Activated B cell treated with CpG ODN at 0.5 μM for 24 hours (primary cell): ENCODE measurements at regions of chr2 and their contacts with region 1.

Region 1: DNA sequence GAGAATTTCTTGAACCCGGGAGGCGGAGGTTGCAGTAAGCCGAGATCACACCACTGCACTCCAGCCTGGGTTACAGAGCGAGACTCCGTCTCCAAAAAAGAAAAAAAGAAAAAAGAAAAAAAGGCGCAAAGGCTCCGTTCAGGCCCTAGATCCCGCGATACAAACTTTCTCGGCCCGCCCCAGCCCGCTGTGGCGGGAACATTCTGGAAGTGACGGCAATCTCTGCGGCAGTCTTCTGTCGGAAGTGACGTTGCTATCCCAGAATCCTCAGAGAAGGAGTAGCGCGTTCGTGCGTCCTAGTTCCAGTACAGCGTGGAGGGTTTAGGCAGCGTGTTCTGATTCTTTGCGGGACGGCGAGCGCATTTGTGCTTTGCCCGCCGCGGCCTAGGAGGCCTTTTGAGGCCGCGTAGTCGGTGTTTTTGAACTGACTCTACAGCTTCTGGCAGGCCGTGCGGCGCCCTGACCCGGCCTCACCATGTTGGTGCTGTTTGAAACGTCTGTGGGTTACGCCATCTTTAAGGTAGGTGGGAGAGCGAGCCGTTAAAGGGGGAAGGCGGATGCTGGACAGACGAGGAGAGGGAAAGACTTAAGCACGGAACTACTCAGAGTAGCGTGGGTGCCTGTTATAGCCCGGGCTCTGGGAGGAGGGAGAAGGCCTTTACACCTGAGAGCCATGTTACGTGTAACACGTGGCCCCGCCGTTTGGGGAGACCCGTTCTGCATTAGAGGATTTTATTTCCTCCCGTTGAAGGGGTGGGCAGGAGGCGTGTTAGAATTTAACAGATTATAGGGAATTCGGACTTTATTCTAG is at the start of gene NOP58:
- DNase-seq: peak; percentile 78
- ATAC-seq: peak; percentile 87
- H3K4me3 Mint-ChIP-seq: peak within 1 kb of the TSS; percentile 38
- H3K27ac Mint-ChIP-seq: no peak within 1 kb of the TSS
- H3K4me1 Mint-ChIP-seq: peaks cover 30% of the 10 kb centered on the region
- H3K27me3 Mint-ChIP-seq: no peaks in the 10 kb centered on the region
- CTCF ChIP-seq: no peak
- total RNA-seq, gene NOP58: 141 and 153 TPM in 2 replicates

Region 2: DNA sequence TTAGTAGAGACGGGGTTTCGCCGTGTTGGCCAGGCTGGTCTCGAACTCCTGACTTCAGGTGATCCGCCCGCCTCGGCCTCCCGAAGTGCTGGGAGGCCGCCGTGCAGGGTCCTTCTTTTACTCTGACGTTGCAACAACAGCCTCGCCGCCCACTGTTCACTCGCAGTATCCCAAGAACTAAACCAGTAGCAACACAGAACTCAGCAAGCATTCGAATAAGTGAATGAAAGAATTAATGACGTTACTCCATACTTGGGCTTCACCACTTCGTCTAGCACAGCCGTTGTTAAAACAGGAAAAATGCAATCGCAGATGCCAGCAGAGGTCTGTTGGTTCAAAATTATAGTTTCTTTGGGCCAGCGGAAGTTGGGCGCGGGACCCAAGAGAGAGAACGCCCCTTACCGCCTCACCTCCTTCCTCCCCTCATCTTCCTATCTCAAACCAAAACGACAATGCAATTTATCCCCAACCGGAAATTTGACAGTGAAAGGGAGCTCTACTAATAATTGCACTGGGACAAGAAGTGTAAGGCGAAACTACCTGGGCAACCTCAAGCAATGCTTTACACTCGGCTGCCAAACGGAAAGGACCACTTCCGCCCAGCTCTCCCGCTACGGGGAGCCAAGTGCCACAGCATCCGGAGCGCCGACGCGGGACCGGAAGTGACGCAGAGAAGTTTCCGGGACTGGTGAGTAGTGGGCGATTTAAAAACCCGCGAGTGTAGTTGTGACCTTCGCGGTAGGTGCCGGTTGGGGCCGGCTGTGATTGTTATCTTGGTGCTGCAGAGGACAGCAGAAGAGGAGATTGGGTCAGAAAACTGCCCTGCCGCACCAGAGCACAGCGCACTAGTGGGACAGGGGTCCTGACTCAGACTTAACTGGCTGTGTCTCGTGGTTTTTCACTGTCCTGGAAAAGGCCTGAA is 1376.7 kb before region 1 on chr2 and contains the starts of genes NIF3L1 and PPIL3:
- CTCF ChIA-PET with region 1: no interaction called
- POLR2A ChIA-PET with region 1: no interaction called
- intact Hi-C with region 1: loop called (anchors 2 kb)
- DNase-seq: peak; percentile 90
- ATAC-seq: peak; percentile 80
- H3K4me3 Mint-ChIP-seq: peak within 1 kb of the TSS; percentile 99
- H3K27ac Mint-ChIP-seq: peak within 1 kb of the TSS; percentile 100
- H3K4me1 Mint-ChIP-seq: peaks cover 40% of the 10 kb centered on the region
- H3K27me3 Mint-ChIP-seq: no peaks in the 10 kb centered on the region
- CTCF ChIP-seq: no peak
- total RNA-seq, gene NIF3L1: 32.2 and 32.3 TPM in 2 replicates
- total RNA-seq, gene PPIL3: 43.5 and 52.5 TPM in 2 replicates

Region 3: GRCh38 chr2:201257956-201258665 is 1007.6 kb before region 1 on chr2:
- CTCF ChIA-PET with region 1: no interaction called
- POLR2A ChIA-PET with region 1: no interaction called
- intact Hi-C with region 1: loop called (anchors 5 kb)
- DNase-seq: peak; percentile 68
- ATAC-seq: peak; percentile 61
- H3K4me3 Mint-ChIP-seq: peak overlapping the region; percentile 90
- H3K27ac Mint-ChIP-seq: peak overlapping the region; percentile 98
- H3K4me1 Mint-ChIP-seq: peaks cover 83% of the 10 kb centered on the region
- H3K27me3 Mint-ChIP-seq: no peaks in the 10 kb centered on the region
- CTCF ChIP-seq: no peak

Region 4: GRCh38 chr2:202033321-202034248 is 232.1 kb before region 1 on chr2 and contains the start of gene FZD7:
- CTCF ChIA-PET with region 1: no interaction called
- POLR2A ChIA-PET with region 1: no interaction called
- intact Hi-C with region 1: loop called (anchors 1 kb)
- DNase-seq: peak; percentile 79
- ATAC-seq: peak; percentile 87
- H3K4me3 Mint-ChIP-seq: peak within 1 kb of the TSS; percentile 86
- H3K27ac Mint-ChIP-seq: peak within 1 kb of the TSS; percentile 14
- H3K4me1 Mint-ChIP-seq: peaks cover 12% of the 10 kb centered on the region
- H3K27me3 Mint-ChIP-seq: peaks cover 17% of the 10 kb centered on the region
- CTCF ChIP-seq: no peak
- total RNA-seq, gene FZD7: 0.33 and 0.37 TPM in 2 replicates

Region 5: GRCh38 chr2:202299712-202300111 is 34.0 kb after region 1 on chr2:
- CTCF ChIA-PET with region 1: no interaction called
- POLR2A ChIA-PET with region 1: interaction called, 10 read pairs
- intact Hi-C with region 1: no loop called
- DNase-seq: no peak
- ATAC-seq: peak; percentile 54
- H3K4me3 Mint-ChIP-seq: no peak overlapping the region
- H3K27ac Mint-ChIP-seq: peak overlapping the region; percentile 28
- H3K4me1 Mint-ChIP-seq: peaks cover 7% of the 10 kb centered on the region
- H3K27me3 Mint-ChIP-seq: no peaks in the 10 kb centered on the region
- CTCF ChIP-seq: no peak

Region 6: GRCh38 chr2:202911512-202912341 is 646.1 kb after region 1 on chr2 and contains the starts of genes CARF and WDR12:
- CTCF ChIA-PET with region 1: no interaction called
- POLR2A ChIA-PET with region 1: interaction called, 6 read pairs
- intact Hi-C with region 1: loop called (anchors 5 kb)
- DNase-seq: peak; percentile 82
- ATAC-seq: peak; percentile 85
- H3K4me3 Mint-ChIP-seq: peak within 1 kb of the TSS; percentile 97
- H3K27ac Mint-ChIP-seq: peak within 1 kb of the TSS; percentile 100
- H3K4me1 Mint-ChIP-seq: peaks cover 29% of the 10 kb centered on the region
- H3K27me3 Mint-ChIP-seq: no peaks in the 10 kb centered on the region
- CTCF ChIP-seq: no peak
- total RNA-seq, gene CARF: 10.6 and 12.0 TPM in 2 replicates
- total RNA-seq, gene WDR12: 57.5 and 63.1 TPM in 2 replicates